Activated CD4-positive, alpha-beta memory T cell treated with anti-CD3 and anti-CD28 coated beads for 36 hours (primary cell): ENCODE measurements at regions of chr10 and their contacts with region 1.

Region 1: GRCh38 chr10:123043409-123043925 is 34.7 kb downstream of the ACADSB start:
- DNase-seq: peak; percentile 49
- H3K4me3 Mint-ChIP-seq: no peak overlapping the region
- H3K27ac Mint-ChIP-seq: no peak overlapping the region
- H3K4me1 Mint-ChIP-seq: no peaks in the 10 kb centered on the region
- H3K27me3 Mint-ChIP-seq: no peaks in the 10 kb centered on the region

Region 2: GRCh38 chr10:123559066-123559822 is 515.8 kb after region 1 on chr10:
- CTCF ChIA-PET with region 1: interaction called, 4 read pairs
- POLR2A ChIA-PET with region 1: no interaction called
- intact Hi-C with region 1: loop called (anchors 1 kb)
- DNase-seq: peak; percentile 73
- H3K4me3 Mint-ChIP-seq: no peak overlapping the region
- H3K27ac Mint-ChIP-seq: no peak overlapping the region
- H3K4me1 Mint-ChIP-seq: no peaks in the 10 kb centered on the region
- H3K27me3 Mint-ChIP-seq: peaks cover 5% of the 10 kb centered on the region